ENCODE measurements at regions of chr22 and their contacts with region 1.

Region 1: GRCh38 chr22:23622634-23623033 is 9.5 kb downstream of the DRICH1 start:
- DNase-seq: no peak
- ATAC-seq: no peak
- H3K4me3 ChIP-seq: no peak overlapping the region
- H3K27ac ChIP-seq: no peak overlapping the region
- H3K4me1 ChIP-seq: no peaks in the 10 kb centered on the region; a peak in 2 of 5 replicates
- H3K27me3 ChIP-seq: no peaks in the 10 kb centered on the region
- CTCF ChIP-seq: no peak
- EP300 ChIP-seq: no peak
- POLR2A ChIP-seq: no peak
- RAD21 ChIP-seq: no peak

Region 2: GRCh38 chr22:23565288-23565941 is 57.2 kb before region 1 on chr22:
- CTCF ChIA-PET with region 1: no interaction called
- POLR2A ChIA-PET with region 1: no interaction called
- in situ Hi-C with region 1: no loop called
- intact Hi-C with region 1: no loop called
- DNase-seq: peak in 1 of 4 experiments; percentile 29
- ATAC-seq: peak; percentile 87
- H3K4me3 ChIP-seq: no peak overlapping the region
- H3K27ac ChIP-seq: no peak overlapping the region
- H3K4me1 ChIP-seq: peaks cover 0 to 9% of the 10 kb centered on the region in 2 experiments; a peak in 2 of 5 replicates
- H3K27me3 ChIP-seq: peaks cover 0 to 30% of the 10 kb centered on the region in 2 experiments; a peak in 3 of 5 replicates
- CTCF ChIP-seq: peak; percentile 9 to 27 (median 13); a peak in 1 of 6 replicates
- EP300 ChIP-seq: no peak
- POLR2A ChIP-seq: no peak
- RAD21 ChIP-seq: 0 out of 4 replicates have a peak, but pooled peaks of 1 of the 2 experiments have one; percentile 11

Region 3: GRCh38 chr22:23696326-23696851 is 73.8 kb after region 1 on chr22:
- CTCF ChIA-PET with region 1: no interaction called
- POLR2A ChIA-PET with region 1: no interaction called
- in situ Hi-C with region 1: no loop called
- intact Hi-C with region 1: no loop called
- DNase-seq: no peak
- ATAC-seq: no peak
- H3K4me3 ChIP-seq: no peak overlapping the region
- H3K27ac ChIP-seq: no peak overlapping the region
- H3K4me1 ChIP-seq: peaks cover 0 to 3% of the 10 kb centered on the region in 2 experiments; a peak in 1 of 5 replicates
- H3K27me3 ChIP-seq: no peaks in the 10 kb centered on the region
- CTCF ChIP-seq: no peak
- EP300 ChIP-seq: no peak
- POLR2A ChIP-seq: no peak
- RAD21 ChIP-seq: no peak

Region 4: DNA sequence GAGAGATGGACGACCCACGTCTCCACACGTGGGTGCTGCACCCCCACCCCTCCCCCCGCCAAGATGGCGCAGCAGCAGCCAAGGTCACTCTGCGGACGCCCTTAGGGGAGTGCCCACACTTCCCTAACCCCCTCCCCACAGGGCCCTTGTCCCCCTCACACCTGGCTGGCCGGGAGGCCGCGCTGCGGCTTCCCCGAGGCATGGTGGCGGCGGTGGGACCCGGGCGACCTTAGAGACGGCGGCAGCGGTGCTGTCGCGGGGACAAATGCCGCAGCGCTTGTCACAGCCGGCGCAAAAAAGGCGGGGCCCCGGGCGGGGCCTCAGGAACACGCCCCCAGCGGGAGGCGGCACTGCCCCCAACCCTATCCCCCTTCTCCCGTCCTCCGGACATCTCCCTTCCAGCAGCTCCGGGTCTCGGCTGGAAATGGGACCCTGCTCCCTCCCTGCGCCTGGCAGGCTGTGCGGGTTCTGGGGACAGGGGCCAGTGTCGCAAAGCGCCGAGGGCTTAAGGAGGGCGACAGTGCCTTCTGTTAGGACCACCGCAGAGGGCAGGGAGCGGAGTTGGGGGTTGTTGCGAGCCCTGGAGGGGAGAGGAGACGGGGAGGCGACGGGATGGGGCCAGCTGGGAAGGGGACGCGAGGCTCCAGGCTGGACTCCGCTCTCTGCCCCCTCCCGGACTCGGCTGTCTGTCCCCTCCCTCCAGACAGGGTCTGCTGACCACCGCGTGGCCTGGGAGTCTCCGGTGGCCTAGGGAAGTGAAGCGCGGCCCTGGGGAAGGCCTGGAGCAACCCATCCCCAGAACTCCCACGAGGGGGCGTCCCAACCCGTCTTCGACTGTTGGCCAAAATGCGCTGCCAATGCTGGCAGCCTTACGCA is 145.3 kb after region 1 on chr22 and contains the start of gene CHCHD10:
- CTCF ChIA-PET with region 1: no interaction called
- POLR2A ChIA-PET with region 1: no interaction called
- in situ Hi-C with region 1: no loop called
- intact Hi-C with region 1: loop called (anchors 10 kb)
- DNase-seq: peak; percentile 83 to 90 (median 86)
- ATAC-seq: peak; percentile 77
- H3K4me3 ChIP-seq: peak within 1 kb of the TSS; percentile 70
- H3K27ac ChIP-seq: peak within 1 kb of the TSS; percentile 98
- H3K4me1 ChIP-seq: peaks cover 25 to 62% of the 10 kb centered on the region in 2 experiments; a peak in 4 of 5 replicates
- H3K27me3 ChIP-seq: no peaks in the 10 kb centered on the region
- CTCF ChIP-seq: peak; percentile 66 to 73 (median 68)
- EP300 ChIP-seq: no peak
- POLR2A ChIP-seq: peak; percentile 96
- RAD21 ChIP-seq: peak in 1 of 2 experiments; percentile 55; a peak in 2 of 4 replicates
- polyA plus RNA-seq, gene CHCHD10: 15.2 to 41.0 TPM

Region 5: GRCh38 chr22:23849009-23850006 is 226.7 kb after region 1 on chr22:
- CTCF ChIA-PET with region 1: interaction called, 3 read pairs
- POLR2A ChIA-PET with region 1: no interaction called
- in situ Hi-C with region 1: loop called (anchors 10 kb)
- intact Hi-C with region 1: loop called (anchors 5 kb)
- DNase-seq: peak; percentile 78 to 84 (median 82)
- ATAC-seq: peak; percentile 97
- H3K4me3 ChIP-seq: no peak overlapping the region
- H3K27ac ChIP-seq: no peak overlapping the region
- H3K4me1 ChIP-seq: peaks cover 3 to 20% of the 10 kb centered on the region in 2 experiments; a peak in 3 of 5 replicates
- H3K27me3 ChIP-seq: no peaks in the 10 kb centered on the region; a peak in 1 of 5 replicates
- CTCF ChIP-seq: peak; percentile 82 to 91 (median 87)
- EP300 ChIP-seq: no peak
- POLR2A ChIP-seq: no peak
- RAD21 ChIP-seq: peak; percentile 80 to 92